Mammary epithelial cell (primary cell): ENCODE measurements at regions of chr1 and their contacts with region 1.

Region 1: DNA sequence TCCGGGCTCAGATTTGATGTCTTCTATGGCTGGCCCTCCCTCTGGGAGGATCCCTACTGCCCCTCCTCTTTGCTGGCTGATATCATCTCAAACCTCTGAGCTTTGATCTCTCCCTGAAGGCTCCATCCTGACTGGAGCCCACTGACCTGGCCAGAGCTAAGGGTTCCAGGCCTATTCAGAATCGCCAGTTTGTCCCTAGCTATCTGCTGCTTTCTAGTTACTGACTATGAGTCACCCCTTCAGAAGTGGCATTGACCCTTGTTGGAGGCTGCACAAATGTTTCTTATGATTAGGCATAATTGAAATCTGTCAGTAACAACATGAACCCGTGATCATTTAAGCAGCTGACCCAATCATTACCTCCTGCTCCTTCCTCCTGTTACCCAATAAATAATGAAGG is 87.1 kb downstream of the ABCA4 start:
- DNase-seq: no peak
- H3K4me3 ChIP-seq: no peak overlapping the region
- H3K27ac ChIP-seq: no peak overlapping the region
- H3K4me1 ChIP-seq: peaks cover 15% of the 10 kb centered on the region
- H3K27me3 ChIP-seq: no peaks in the 10 kb centered on the region
- CTCF ChIP-seq: no peak

Region 2: GRCh38 chr1:93995837-93996536 is 37.9 kb before region 1 on chr1:
- CTCF ChIA-PET with region 1: no interaction called
- dilution Hi-C with region 1: loop called (anchors 5 kb)
- in situ Hi-C with region 1: no loop called
- intact Hi-C with region 1: no loop called
- DNase-seq: no peak
- H3K4me3 ChIP-seq: no peak overlapping the region
- H3K27ac ChIP-seq: no peak overlapping the region
- H3K4me1 ChIP-seq: peaks cover 57% of the 10 kb centered on the region
- H3K27me3 ChIP-seq: no peaks in the 10 kb centered on the region
- CTCF ChIP-seq: no peak

Region 3: DNA sequence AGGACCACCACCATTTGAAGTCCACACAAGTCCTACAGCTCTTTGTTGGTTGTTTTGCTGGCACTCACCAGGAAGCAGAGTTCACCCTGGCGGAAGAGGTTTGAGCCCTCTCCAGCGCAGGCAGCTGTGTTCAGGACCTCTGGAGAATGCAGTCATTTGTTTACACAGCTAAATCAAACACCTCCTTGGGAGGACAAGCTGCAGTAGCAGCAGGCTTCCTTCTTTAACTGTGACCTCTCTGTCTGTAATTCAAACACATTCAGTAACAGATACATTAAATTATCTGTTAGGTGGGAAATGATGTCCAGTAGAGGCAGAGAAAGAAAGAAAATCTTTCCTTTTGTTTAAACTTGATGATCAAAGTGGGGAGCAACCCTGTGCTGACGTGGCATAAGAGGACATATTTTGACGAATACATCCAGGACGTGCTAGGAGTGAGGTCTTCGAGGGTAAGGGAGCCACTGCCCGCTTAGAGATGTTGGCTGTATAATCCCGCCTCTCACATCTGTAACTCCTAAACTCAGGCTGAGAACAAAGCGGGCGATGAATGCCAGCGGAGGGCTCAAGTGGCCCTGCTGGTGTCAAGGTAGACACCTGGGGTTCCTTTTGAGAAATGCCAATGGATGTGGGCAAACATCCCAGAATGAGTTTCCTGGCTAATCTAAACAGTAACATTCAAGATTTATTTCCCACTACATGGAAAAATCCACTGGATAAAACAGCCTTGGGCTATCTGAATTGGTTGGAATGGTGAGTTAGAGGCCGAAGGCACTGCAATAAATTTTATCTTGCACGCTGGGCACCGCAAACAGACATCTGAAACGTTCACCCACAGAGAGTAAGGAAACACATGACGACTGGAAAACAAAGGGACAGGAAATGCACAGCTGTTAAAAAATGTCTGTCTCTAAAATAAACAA is 35.4 kb after region 1 on chr1:
- CTCF ChIA-PET with region 1: no interaction called
- dilution Hi-C with region 1: no loop called
- in situ Hi-C with region 1: no loop called
- intact Hi-C with region 1: no loop called
- DNase-seq: no peak
- H3K4me3 ChIP-seq: no peak overlapping the region
- H3K27ac ChIP-seq: no peak overlapping the region
- H3K4me1 ChIP-seq: peaks cover 12% of the 10 kb centered on the region
- H3K27me3 ChIP-seq: no peaks in the 10 kb centered on the region
- CTCF ChIP-seq: no peak

Region 4: GRCh38 chr1:94358630-94359599 is 325.1 kb after region 1 on chr1:
- CTCF ChIA-PET with region 1: no interaction called
- dilution Hi-C with region 1: loop called (anchors 5 kb)
- in situ Hi-C with region 1: no loop called
- intact Hi-C with region 1: no loop called
- DNase-seq: no peak
- H3K4me3 ChIP-seq: no peak overlapping the region
- H3K27ac ChIP-seq: no peak overlapping the region
- H3K4me1 ChIP-seq: no peaks in the 10 kb centered on the region
- H3K27me3 ChIP-seq: peaks cover 3% of the 10 kb centered on the region
- CTCF ChIP-seq: no peak